ENCODE measurements at regions of chr2 and their contacts with region 1.

Region 1: DNA sequence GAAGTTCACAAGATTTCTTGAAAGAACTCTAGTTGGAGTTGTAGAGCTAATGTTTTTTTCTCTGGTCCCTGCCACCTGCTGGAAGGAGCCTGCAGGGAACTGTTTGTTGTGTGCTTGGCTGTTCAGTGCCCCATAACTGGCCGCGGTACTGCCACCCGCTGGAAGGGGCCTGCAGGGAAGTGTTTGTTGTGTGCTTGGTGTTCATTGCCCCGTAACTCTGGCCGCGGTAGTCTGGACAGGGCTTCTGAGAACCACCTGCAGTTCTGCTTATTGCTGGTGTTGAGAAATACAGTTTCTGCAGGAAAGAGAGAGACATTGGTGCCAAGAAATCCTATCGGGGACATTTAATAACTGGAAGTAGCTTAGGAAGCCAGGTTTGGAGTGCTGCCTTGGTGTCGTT is 58.1 kb downstream of the AGAP1 start:
- DNase-seq: peak; percentile 74 to 82
- H3K4me3 ChIP-seq: no peak overlapping the region
- H3K27ac ChIP-seq: 0 out of 2 replicates have a peak overlapping the region, but pooled peaks have one; percentile 13
- H3K4me1 ChIP-seq: peaks cover 42% of the 10 kb centered on the region
- H3K27me3 ChIP-seq: no peaks in the 10 kb centered on the region
- CTCF ChIP-seq: peak; percentile 71

Region 2: DNA sequence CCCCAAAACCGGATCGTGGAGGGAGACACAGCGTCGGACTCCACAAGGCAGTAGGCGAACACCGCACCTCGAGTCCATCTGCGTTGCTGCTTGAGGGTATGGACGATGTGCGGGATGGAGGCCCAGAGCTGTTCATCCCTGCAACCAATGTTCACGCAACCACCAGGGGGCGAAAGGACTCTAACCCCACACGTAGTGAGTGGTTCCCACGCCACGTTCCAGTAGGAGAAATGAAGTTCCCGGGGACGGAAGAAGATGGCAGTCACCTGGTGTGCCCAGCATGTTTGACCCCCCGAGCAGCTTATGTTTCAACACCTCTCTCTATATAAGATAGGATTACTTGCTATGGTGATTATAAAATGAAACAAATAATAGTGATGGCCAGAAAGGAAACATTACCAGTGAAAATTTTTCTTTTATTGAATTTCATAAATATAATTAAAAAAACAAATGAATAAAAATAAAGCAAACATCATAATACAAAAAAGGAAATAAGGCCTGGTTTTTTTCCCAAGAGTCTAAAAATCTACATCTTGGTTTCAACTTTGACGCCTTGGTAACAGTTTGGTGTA is 415.9 kb before region 1 on chr2:
- CTCF ChIA-PET with region 1: interaction called, 5 read pairs
- POLR2A ChIA-PET with region 1: no interaction called
- intact Hi-C with region 1: loop called (anchors 1 kb)
- DNase-seq: peak; percentile 78 to 86
- H3K4me3 ChIP-seq: no peak overlapping the region
- H3K27ac ChIP-seq: no peak overlapping the region
- H3K4me1 ChIP-seq: no peaks in the 10 kb centered on the region
- H3K27me3 ChIP-seq: no peaks in the 10 kb centered on the region
- CTCF ChIP-seq: peak; percentile 94

Region 3: DNA sequence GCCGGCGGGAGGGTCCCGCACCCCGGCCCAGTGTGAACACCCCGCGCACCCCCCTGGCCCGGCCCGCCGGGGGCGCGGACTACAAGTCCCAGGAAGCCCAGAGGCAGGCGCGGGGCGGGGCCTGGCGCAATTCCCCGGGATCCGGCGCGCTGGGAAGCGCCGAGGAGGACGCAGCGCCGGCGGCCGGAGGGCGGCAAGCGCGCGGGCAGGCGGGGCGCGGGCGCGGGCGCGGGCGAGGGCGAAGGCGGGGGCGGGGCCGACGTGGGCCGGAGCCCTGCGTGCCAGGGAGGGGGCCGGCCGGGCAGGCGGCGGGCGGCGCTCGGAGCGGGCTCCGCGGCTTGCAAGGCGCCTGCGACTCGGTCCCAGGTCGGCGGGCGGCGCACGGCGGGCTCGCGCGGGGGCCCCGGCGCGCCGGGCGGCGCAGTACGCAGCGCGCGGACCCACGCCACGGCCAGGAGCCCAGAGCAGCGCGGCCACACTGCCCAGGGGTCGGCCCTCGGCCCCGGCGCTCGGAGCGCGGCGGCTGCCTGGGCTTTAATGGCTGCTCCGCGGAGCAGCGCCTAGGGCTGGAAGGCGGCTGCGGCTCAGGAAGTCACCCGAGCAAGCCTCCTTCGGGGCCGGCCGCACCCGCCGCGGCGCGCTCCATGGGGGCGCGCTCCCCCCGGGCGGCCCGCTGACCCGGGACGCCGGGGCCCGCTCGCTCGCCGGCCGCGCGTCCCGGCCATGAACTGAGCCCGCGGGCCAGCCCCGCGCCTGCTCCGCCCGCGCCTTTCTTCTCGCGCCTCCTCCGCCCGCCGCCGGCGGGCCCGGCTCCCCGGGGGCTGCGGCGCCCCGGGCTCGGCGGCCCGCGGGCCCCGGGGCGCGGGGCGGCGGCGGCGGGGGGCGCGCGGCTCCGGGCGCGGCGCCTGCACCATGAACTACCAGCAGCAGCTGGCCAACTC is 57.9 kb before region 1 on chr2 and contains the start of gene AGAP1:
- CTCF ChIA-PET with region 1: no interaction called
- POLR2A ChIA-PET with region 1: no interaction called
- intact Hi-C with region 1: loop called (anchors 1 kb)
- DNase-seq: peak; percentile 75 to 97
- H3K4me3 ChIP-seq: peak within 1 kb of the TSS; percentile 77
- H3K27ac ChIP-seq: peak within 1 kb of the TSS; percentile 69
- H3K4me1 ChIP-seq: peaks cover 20% of the 10 kb centered on the region
- H3K27me3 ChIP-seq: no peaks in the 10 kb centered on the region
- CTCF ChIP-seq: no peak
- total RNA-seq, gene AGAP1: 91.4 and 107 TPM in 2 replicates

Region 4: GRCh38 chr2:235500761-235501672 is 50.9 kb before region 1 on chr2:
- CTCF ChIA-PET with region 1: interaction called, 14 read pairs
- POLR2A ChIA-PET with region 1: interaction called, 3 read pairs
- intact Hi-C with region 1: no loop called
- DNase-seq: peak; percentile 48 to 76
- H3K4me3 ChIP-seq: peak overlapping the region; percentile 29; the same call in 1 of the 2 replicates
- H3K27ac ChIP-seq: peak overlapping the region; percentile 61
- H3K4me1 ChIP-seq: peaks cover 65% of the 10 kb centered on the region
- H3K27me3 ChIP-seq: no peaks in the 10 kb centered on the region
- CTCF ChIP-seq: no peak

Region 5: DNA sequence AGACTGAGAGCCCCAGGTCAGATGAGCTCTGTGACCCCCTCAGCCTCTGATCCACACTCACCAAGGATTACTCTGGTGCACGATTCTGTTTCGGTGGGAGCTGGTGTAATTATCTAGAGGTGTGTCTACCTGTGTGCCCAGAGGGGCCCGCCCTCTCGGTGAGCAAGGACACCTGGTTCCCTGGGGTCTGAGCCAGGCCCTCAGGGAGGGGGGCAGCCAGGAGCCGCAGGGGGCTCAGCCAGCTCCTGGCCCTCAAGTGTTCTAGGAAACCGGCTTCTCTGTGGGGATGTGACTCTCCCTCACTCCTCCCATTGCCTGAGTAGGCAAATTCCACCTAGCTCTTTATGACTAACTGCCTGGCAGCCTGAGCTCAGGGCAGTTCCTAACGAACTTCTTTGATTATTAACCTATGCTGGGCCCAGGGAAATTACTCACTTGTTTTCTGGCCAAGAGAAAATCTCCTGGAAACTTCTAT is 40.7 kb before region 1 on chr2:
- CTCF ChIA-PET with region 1: interaction called, 13 read pairs
- POLR2A ChIA-PET with region 1: interaction called, 3 read pairs
- intact Hi-C with region 1: no loop called
- DNase-seq: peak; percentile 69 to 84
- H3K4me3 ChIP-seq: no peak overlapping the region
- H3K27ac ChIP-seq: 0 out of 2 replicates have a peak overlapping the region, but pooled peaks have one; percentile 24
- H3K4me1 ChIP-seq: peaks cover 18% of the 10 kb centered on the region
- H3K27me3 ChIP-seq: no peaks in the 10 kb centered on the region
- CTCF ChIP-seq: no peak

Region 6: DNA sequence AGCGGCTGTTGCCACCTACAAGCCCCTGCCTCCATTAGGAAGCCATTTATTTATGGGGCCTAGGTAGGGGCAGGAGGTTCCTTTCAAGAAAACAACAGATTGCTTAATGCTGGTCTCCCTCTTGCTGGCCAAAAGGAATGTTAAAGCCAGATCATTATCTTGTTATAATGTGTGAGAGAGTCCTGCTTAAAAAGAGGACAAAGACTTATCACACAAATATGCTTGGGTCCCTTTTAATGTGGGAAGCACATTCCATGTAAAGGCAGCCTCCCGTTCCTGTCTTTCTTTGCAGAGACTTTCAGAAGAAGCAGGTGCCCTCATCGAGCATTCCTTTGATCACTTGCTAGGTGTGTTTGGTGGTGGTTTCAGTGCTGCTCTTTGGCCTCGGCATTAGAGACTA is 18.3 kb after region 1 on chr2:
- CTCF ChIA-PET with region 1: no interaction called
- POLR2A ChIA-PET with region 1: no interaction called
- intact Hi-C with region 1: loop called (anchors 2 kb)
- DNase-seq: peak; percentile 73 to 99
- H3K4me3 ChIP-seq: no peak overlapping the region
- H3K27ac ChIP-seq: peak overlapping the region; percentile 88
- H3K4me1 ChIP-seq: peaks cover 40% of the 10 kb centered on the region
- H3K27me3 ChIP-seq: no peaks in the 10 kb centered on the region
- CTCF ChIP-seq: no peak

Region 7: DNA sequence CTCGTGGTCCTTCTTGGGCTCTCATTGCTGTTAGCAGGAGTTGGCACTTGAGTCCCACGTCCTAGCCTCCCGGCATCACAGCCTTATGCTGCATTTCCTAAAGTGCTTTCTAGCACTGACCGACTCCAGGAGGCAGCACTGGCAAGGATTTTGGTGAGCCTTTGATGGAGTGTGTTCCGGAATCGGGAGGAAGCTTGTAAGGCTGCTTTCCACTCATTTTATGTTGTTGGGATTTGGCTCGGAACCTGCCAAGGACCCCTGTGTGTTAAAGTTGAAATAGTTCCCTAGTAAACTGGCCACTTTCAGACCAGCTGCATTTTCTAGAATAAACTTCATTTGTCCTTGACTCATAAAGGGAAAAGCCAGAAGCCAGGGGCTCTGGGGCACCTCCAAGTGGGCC is 30.8 kb after region 1 on chr2:
- CTCF ChIA-PET with region 1: no interaction called
- POLR2A ChIA-PET with region 1: no interaction called
- intact Hi-C with region 1: loop called (anchors 1 kb)
- DNase-seq: no peak
- H3K4me3 ChIP-seq: no peak overlapping the region
- H3K27ac ChIP-seq: no peak overlapping the region
- H3K4me1 ChIP-seq: 0 out of 2 replicates have a peak, but pooled peaks cover 5% of the 10 kb centered on the region
- H3K27me3 ChIP-seq: no peaks in the 10 kb centered on the region
- CTCF ChIP-seq: no peak

Measured in PC-9 (cell line).